Posterior vena cava (tissue), 2 donors: ENCODE measurements at regions of chr17 and their contacts with region 1.

Region 1: GRCh38 chr17:76252040-76252954 is 12.0 kb upstream of the RNF157 start:
- DNase-seq: peak; percentile 92

Region 2: DNA sequence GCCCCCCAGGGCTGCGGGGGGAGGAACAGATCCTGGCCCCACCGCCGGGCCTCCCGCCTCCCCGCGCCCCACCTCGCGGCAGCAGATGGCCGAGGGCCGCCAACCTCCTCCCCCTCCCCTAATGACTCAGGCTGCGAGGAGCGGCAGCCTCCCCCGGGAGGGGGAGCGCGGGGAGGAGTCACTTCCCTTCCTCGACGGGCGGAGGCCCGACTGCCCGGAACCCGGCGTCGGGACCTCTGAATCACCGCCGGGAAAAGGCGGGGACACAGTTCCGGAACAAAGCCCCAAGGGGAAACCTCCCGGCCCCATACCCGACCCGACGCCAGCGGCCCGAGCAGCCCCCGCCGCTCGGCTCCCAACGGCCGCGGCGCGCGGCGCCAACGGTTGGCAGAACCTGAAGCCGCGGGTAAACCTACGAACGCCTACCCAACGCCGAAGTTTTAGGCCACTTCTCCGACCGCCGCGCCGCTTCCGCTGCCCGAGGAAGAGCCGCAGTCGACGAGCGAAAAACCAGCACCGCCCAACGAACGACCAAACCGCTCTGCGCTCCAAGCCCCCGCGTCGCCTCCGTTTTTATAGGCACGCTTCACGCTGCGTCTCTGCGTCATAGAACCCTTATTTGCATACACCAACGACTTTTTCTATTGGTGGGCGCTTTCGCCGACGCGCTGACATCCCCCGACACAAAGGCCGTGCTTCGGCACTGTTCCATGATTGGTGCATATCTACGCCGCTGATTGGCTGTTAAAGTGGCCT is 472.9 kb before region 1 on chr17:
- intact Hi-C with region 1: loop called in 1 of 2 experiments (anchors 5 kb)
- DNase-seq: peak; percentile 99

Region 3: DNA sequence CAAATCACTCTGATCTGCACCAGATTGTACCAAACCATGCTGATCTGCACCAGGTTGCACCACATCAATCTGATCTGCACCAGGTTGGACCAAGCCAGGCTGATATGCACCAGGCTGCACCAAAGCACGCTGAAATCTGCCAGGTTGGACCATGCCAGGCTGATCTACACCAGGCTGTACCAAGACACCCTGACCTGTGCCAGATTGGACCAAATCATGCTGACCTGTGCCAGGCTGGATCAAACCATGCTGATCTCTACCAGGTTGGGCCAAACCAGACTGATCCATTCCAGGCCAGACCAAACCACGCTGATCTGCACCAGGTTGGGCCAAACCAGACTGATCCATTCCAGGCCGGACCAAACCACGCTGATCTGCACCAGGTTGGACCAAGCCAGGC is 40.3 kb after region 1 on chr17:
- intact Hi-C with region 1: loop called in 1 of 2 experiments (anchors 1 kb)
- DNase-seq: no peak

Region 4: GRCh38 chr17:76318586-76318985 is 66.3 kb after region 1 on chr17:
- intact Hi-C with region 1: no loop called
- DNase-seq: no peak